ENCODE measurements at regions of chr17 and their contacts with region 1.

Region 1: GRCh38 chr17:75289115-75289831 is at the start of gene SLC25A19:
- DNase-seq: peak; percentile 99
- H3K4me3 ChIP-seq: peak within 1 kb of the TSS; percentile 80 to 99 (median 92)
- H3K27ac ChIP-seq: peak within 1 kb of the TSS; percentile 85
- H3K4me1 ChIP-seq: peaks cover 9% of the 10 kb centered on the region
- H3K27me3 ChIP-seq: no peaks in the 10 kb centered on the region
- CTCF ChIP-seq: no peak
- total RNA-seq, gene SLC25A19: 4.5 to 12.1 TPM

Region 2: DNA sequence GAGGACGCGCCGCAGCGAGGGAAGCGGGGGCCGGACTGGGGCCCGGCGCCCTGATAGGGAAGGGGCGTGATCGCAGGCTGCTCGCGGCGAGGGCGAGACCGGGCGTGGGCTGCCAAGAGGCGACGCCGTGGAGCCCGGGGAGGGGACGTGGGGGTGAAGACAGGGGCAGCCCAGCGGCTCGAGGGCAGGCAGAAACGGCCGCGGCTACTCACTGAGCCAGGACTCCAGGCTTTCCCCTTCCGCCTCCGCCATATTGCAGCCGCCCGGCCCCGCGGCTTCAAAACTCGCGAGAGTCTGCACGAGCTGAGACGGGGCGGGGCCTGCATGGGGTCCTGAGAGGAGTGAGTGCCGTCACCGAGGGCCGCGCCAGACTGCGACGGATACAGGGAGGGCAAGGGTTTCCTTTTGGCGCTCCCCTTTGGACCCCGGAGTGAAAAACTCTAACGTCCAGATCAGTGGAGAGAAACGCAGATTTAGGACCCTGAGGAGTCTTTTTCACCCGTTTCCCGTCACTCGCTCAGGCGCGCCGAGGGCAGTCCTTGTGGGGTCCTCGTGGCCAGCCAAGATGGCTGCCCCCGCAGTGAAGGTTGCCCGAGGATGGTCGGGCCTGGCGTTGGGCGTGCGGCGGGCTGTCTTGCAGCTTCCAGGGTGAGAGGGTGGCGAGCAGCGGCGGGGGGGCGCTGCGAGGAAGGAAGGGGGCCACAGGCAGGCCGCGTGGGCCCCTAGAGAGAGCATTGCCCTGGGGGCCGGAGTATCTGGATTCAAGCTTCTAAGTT is 27.7 kb before region 1 on chr17 and contains the starts of genes GGA3 and MRPS7:
- CTCF ChIA-PET with region 1: interaction called, 3 read pairs
- dilution Hi-C with region 1: no loop called
- in situ Hi-C with region 1: no loop called
- intact Hi-C with region 1: loop called (anchors 2 kb)
- DNase-seq: peak; percentile 92
- H3K4me3 ChIP-seq: peak within 1 kb of the TSS; percentile 75 to 92 (median 79)
- H3K27ac ChIP-seq: peak within 1 kb of the TSS; percentile 98
- H3K4me1 ChIP-seq: peaks cover 18% of the 10 kb centered on the region
- H3K27me3 ChIP-seq: no peaks in the 10 kb centered on the region
- CTCF ChIP-seq: no peak
- total RNA-seq, gene GGA3: 9.7 to 30.9 TPM
- total RNA-seq, gene MRPS7: 36.0 to 55.5 TPM

Region 3: GRCh38 chr17:75335315-75335714 is 46.0 kb after region 1 on chr17:
- CTCF ChIA-PET with region 1: no interaction called
- dilution Hi-C with region 1: no loop called
- in situ Hi-C with region 1: no loop called
- intact Hi-C with region 1: no loop called
- DNase-seq: no peak
- H3K4me3 ChIP-seq: no peak overlapping the region
- H3K27ac ChIP-seq: no peak overlapping the region
- H3K4me1 ChIP-seq: no peaks in the 10 kb centered on the region
- H3K27me3 ChIP-seq: no peaks in the 10 kb centered on the region
- CTCF ChIP-seq: no peak

Region 4: DNA sequence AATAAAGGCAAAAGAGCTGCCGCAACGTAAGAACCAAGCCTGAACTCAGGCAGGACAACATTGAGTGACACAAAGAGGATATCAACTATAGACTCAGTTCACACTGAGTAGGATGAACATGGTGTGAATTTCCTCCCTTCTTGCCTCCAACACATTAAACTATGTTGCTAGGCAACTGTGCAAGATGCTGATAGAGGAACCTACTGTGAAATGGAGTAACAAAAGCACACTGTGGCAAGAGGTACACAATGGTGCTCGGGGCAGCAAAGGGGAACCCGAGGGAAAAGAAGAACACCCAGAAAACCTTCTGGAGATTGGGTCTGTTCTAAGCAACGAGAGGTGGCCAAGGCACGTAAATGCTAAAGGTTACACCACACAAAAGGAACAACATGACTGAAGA is 82.1 kb after region 1 on chr17:
- CTCF ChIA-PET with region 1: no interaction called
- dilution Hi-C with region 1: no loop called
- in situ Hi-C with region 1: no loop called
- intact Hi-C with region 1: no loop called
- DNase-seq: no peak
- H3K4me3 ChIP-seq: no peak overlapping the region
- H3K27ac ChIP-seq: no peak overlapping the region
- H3K4me1 ChIP-seq: no peaks in the 10 kb centered on the region
- H3K27me3 ChIP-seq: no peaks in the 10 kb centered on the region
- CTCF ChIP-seq: no peak

Region 5: GRCh38 chr17:75412455-75413317 is 123.4 kb after region 1 on chr17:
- CTCF ChIA-PET with region 1: no interaction called
- dilution Hi-C with region 1: no loop called
- in situ Hi-C with region 1: no loop called
- intact Hi-C with region 1: loop called (anchors 1 kb)
- DNase-seq: peak; percentile 62
- H3K4me3 ChIP-seq: no peak overlapping the region
- H3K27ac ChIP-seq: no peak overlapping the region
- H3K4me1 ChIP-seq: peaks cover 3% of the 10 kb centered on the region
- H3K27me3 ChIP-seq: no peaks in the 10 kb centered on the region
- CTCF ChIP-seq: peak; percentile 69 to 75

Measured in mammary epithelial cell (primary cell).